Left lung (tissue), 14 donors: ENCODE measurements at regions of chr11 and their contacts with region 1.

Region 1: DNA sequence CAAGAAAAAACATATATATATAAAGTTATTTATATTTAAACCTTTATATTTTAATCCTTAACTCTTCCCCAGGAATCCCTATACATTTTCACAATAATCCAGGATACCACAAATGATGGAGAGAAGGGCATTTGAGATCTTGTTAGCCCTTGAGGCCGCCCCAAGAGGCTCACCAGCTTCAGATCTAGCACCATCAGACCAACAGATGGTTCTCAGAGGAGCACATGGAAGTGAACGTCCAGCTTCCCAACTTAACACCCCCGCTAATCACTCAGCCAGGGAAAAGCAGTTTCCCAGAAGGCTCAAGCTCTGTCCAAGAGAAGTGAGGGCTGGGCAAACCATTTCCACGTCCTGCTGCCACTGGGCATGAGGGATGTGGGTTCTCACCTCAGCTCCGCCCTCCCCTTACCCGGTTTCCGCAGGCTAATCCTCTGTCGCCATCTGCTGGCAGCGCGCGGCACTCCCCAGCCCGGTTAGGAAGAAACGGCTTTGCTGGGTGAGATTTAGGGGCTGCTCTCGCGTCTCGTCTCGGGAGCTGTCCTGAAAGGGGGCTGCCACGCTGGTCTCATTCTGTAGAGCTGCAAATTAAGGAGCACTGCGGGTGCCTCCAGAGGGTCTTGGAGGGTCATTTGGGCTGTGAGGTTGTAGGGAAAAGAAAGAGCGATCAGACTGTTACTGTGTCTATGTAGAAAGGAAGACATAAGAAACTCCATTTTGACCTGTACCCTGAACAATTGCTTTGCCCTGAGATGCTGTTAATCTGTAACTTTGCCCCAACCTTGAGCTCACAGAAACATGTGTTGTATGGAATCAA is 6.8 kb upstream of the FAM111A start:
- DNase-seq: peak; percentile 69 to 95 (median 84)
- ATAC-seq: peak; percentile 100
- H3K4me3 ChIP-seq: no peak overlapping the region
- H3K27ac ChIP-seq: no peak overlapping the region
- H3K4me1 ChIP-seq: peaks cover 0 to 7% of the 10 kb centered on the region in 2 donors
- H3K27me3 ChIP-seq: no peaks in the 10 kb centered on the region
- CTCF ChIP-seq: peak; percentile 94 to 96

Region 2: GRCh38 chr11:59102259-59102765 is 33.5 kb before region 1 on chr11:
- intact Hi-C with region 1: loop called in 1 of 2 experiments (anchors 5 kb)
- DNase-seq: peak; percentile 16 to 82 (median 65)
- ATAC-seq: peak; percentile 70
- H3K4me3 ChIP-seq: peak overlapping the region; percentile 3 to 25
- H3K27ac ChIP-seq: no peak overlapping the region
- H3K4me1 ChIP-seq: peaks cover 0 to 26% of the 10 kb centered on the region in 2 donors
- H3K27me3 ChIP-seq: peaks cover 0 to 31% of the 10 kb centered on the region in 2 donors
- CTCF ChIP-seq: peak; percentile 19 to 32

Region 3: GRCh38 chr11:59207988-59208451 is 72.2 kb after region 1 on chr11:
- intact Hi-C with region 1: no loop called
- DNase-seq: peak in 2 of 4 donors; percentile 45 to 75
- ATAC-seq: peak; percentile 77
- H3K4me3 ChIP-seq: peak overlapping the region in 1 of 2 donors; percentile 44
- H3K27ac ChIP-seq: peak overlapping the region; percentile 13 to 51
- H3K4me1 ChIP-seq: peaks cover 8 to 57% of the 10 kb centered on the region in 2 donors
- H3K27me3 ChIP-seq: no peaks in the 10 kb centered on the region
- CTCF ChIP-seq: peak; percentile 57

Region 4: GRCh38 chr11:59787816-59788215 is 652.0 kb after region 1 on chr11:
- intact Hi-C with region 1: no loop called
- DNase-seq: no peak
- ATAC-seq: no peak
- H3K4me3 ChIP-seq: no peak overlapping the region
- H3K27ac ChIP-seq: peak overlapping the region; percentile 53 to 68
- H3K4me1 ChIP-seq: peaks cover 5 to 24% of the 10 kb centered on the region in 2 donors
- H3K27me3 ChIP-seq: no peaks in the 10 kb centered on the region
- CTCF ChIP-seq: no peak